Ascending aorta (tissue), 2 donors: ENCODE measurements at regions of chr9 and their contacts with region 1.

Region 1: DNA sequence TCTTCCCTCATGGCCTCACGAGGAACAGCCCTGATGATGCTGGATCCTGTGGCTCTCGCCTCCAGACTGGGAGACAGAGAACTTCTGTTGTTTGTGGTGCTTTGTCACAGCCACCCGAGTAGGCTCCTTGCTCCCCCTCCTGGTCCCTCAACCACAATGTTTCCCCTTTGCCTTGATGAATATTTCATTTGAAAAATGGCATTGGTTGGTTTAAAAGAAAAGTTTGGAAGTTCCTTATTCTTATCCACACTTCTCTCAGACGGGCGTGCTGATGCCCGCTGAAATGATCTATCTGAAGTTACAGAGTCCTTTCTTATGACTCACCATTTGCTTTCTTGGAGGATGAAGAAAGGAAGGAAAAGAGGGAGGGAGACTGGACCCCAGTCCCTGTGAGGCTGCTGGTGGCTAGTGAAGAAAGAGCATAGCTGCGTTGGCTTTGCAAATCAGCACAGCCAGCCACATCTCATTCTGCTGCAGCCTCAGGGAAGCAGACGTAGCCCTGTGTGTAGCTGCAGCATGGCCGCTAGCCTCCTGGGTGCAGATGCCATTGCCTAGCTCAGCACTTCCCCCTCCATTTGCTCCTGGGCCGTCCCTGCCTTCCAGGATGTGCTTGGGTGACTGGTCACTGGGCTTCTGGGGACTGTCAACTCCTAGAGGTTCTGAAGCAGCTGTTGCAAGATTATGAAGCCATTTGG is 185.9 kb downstream of the ERCC6L2 start:
- DNase-seq: peak in 1 of 2 donors; percentile 76
- H3K4me3 ChIP-seq: no peak overlapping the region
- H3K27ac ChIP-seq: peak overlapping the region; percentile 22 to 44
- H3K4me1 ChIP-seq: peaks cover 0 to 9% of the 10 kb centered on the region in 2 donors
- H3K27me3 ChIP-seq: no peaks in the 10 kb centered on the region
- CTCF ChIP-seq: peak; percentile 36 to 54 (median 37)

Region 2: DNA sequence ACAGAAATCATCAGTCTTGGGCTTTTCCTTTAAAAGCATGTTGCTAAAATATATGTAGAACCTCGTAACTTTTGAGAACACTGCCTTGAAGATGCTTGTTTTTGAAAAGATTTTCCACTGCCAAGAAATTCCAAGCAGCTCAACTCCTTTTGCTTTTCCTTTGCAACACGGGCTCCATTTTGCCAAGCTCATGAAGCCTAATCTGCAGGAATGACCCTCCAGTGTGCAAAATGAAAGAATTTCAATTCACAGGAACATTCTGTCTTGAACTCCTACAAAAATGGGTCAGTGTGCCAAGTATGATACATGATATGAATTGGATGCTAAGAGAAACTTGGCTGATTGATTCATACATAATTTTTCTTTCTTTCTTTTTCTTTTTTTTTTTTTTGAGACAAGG is 221.4 kb before region 1 on chr9:
- intact Hi-C with region 1: no loop called
- DNase-seq: no peak
- H3K4me3 ChIP-seq: no peak overlapping the region
- H3K27ac ChIP-seq: no peak overlapping the region
- H3K4me1 ChIP-seq: no peaks in the 10 kb centered on the region
- H3K27me3 ChIP-seq: no peaks in the 10 kb centered on the region
- CTCF ChIP-seq: no peak

Region 3: GRCh38 chr9:96025995-96026602 is 35.3 kb before region 1 on chr9:
- intact Hi-C with region 1: loop called (anchors 5 kb)
- DNase-seq: no peak
- H3K4me3 ChIP-seq: no peak overlapping the region
- H3K27ac ChIP-seq: no peak overlapping the region
- H3K4me1 ChIP-seq: peaks cover 9 to 36% of the 10 kb centered on the region in 2 donors
- H3K27me3 ChIP-seq: peaks cover 7% of the 10 kb centered on the region
- CTCF ChIP-seq: no peak

Region 4: GRCh38 chr9:96217754-96218693 is 156.6 kb after region 1 on chr9:
- intact Hi-C with region 1: loop called (anchors 5 kb)
- DNase-seq: peak in 1 of 2 donors; percentile 72
- H3K4me3 ChIP-seq: peak overlapping the region; percentile 40 to 57
- H3K27ac ChIP-seq: peak overlapping the region; percentile 10 to 32
- H3K4me1 ChIP-seq: peaks cover 0 to 16% of the 10 kb centered on the region in 2 donors
- H3K27me3 ChIP-seq: no peaks in the 10 kb centered on the region
- CTCF ChIP-seq: peak; percentile 90 to 98 (median 96)